Mucosa of descending colon (tissue), 3 donors: ENCODE measurements at regions of chr17 and their contacts with region 1.

Region 1: DNA sequence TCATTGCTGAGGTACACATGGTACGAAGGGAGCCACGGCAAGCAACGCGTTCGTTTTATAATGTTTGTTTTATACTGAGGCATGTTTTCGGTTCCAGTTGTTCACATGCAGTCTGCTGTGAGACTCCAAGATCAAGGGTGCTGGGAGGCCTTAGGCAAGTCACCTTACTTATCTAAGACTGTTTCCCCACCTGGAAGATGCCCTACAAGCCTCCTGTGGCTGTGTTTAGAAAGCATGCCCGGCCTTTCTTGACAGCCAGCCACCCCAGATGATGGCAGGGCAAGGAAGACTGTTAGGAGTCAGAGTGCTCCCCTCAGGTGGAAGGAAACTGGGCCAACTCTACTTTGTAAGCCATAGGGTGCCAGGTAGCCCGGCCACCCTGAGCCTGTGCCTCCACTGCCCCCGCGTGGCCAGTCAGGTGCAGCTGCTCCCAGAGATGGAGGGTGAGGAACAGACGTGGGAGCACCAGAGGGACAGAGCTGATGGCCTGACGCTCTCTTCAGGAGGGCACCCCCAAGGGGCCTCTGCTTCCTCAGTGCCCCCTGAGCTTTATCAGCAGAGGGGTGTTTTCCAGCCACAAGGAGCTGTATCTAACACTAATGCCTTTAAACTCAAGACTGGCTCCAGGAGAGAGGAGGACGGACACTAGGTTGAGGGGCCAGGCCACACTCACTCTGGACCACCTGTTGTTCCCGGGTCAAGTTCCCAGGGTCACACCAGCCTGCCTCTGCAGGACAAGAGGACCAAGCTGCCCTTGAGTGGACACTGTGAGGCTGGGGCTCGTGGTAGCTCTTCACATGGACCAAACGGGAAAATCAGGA is 5.4 kb downstream of the NAT9 start:
- DNase-seq: peak; percentile 79 to 88 (median 83)
- ATAC-seq: peak; percentile 91
- H3K4me3 ChIP-seq: no peak overlapping the region
- H3K4me1 ChIP-seq: peaks cover 15% of the 10 kb centered on the region
- CTCF ChIP-seq: peak; percentile 80

Region 2: DNA sequence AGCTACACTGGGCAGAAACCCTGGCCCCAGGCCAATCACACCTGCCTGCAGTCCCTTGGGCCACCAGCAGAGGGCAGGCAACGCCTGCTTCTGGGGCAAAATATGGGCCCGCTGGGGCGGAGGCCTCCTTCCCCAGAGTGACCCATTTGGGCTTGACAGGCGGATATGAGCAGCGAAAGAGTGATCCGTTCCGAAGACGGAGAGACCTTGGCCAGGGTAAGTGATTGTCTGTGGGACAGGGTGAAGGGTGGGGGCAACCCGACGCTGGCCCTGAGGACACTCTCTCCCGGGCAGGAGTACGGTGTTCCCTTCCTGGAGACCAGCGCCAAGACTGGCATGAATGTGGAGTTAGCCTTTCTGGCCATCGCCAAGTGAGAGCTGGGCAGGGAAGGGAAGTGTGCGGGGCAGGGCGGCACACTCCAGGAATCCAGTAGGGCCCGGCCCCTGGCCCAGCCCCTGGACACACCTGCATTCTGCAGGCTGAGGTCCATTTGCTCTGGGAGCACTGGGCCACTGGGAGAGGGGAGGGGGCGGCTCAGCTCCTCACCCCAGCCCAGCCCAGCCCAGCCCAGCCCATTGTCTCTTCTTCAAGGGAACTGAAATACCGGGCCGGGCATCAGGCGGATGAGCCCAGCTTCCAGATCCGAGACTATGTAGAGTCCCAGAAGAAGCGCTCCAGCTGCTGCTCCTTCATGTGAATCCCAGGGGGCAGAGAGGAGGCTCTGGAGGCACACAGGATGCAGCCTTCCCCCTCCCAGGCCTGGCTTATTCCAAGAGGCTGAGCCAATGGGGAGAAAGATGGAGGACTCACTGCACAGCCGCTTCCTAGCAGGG is 25.8 kb before region 1 on chr17:
- intact Hi-C with region 1: loop called in 1 of 2 experiments (anchors 2 kb)
- DNase-seq: peak; percentile 90 to 98 (median 97)
- ATAC-seq: peak; percentile 65
- H3K4me3 ChIP-seq: no peak overlapping the region
- H3K4me1 ChIP-seq: peaks cover 24% of the 10 kb centered on the region
- CTCF ChIP-seq: peak; percentile 100

Region 3: GRCh38 chr17:74852237-74853047 is 81.7 kb after region 1 on chr17:
- intact Hi-C with region 1: no loop called
- DNase-seq: peak in 1 of 3 donors; percentile 48
- ATAC-seq: peak; percentile 78
- H3K4me3 ChIP-seq: no peak overlapping the region
- H3K4me1 ChIP-seq: peaks cover 3% of the 10 kb centered on the region
- CTCF ChIP-seq: no peak